Endothelial cell of umbilical vein (primary cell): ENCODE measurements at regions of chr13 and their contacts with region 1.

Region 1: GRCh38 chr13:71395053-71395452 is 472.0 kb downstream of the DACH1 start:
- DNase-seq: no peak
- H3K4me3 ChIP-seq: no peak overlapping the region
- H3K27ac ChIP-seq: no peak overlapping the region
- H3K4me1 ChIP-seq: no peaks in the 10 kb centered on the region
- H3K27me3 ChIP-seq: no peaks in the 10 kb centered on the region
- CTCF ChIP-seq: no peak
- POLR2A ChIP-seq: no peak

Region 2: DNA sequence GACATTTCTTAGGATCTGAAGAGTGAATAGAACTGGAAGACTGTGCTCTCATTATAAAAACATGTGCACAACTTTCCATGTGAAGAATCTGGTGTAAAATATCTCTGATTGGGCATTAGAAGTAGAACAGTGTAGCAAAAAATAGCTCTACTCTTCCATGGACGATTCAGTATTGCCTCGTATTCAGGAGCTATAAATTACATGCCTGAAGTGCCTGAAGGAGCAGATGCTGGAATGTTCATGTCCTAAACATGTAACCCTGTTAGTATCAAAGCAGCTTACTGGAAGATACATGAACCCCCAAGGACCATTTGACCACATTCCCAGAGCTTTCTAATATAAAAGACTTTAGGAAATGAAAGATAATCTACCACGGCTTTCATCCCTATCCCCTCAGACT is 57.0 kb before region 1 on chr13:
- CTCF ChIA-PET with region 1: no interaction called
- POLR2A ChIA-PET with region 1: no interaction called
- dilution Hi-C with region 1: no loop called
- intact Hi-C with region 1: loop called (anchors 10 kb)
- DNase-seq: no peak
- H3K4me3 ChIP-seq: no peak overlapping the region
- H3K27ac ChIP-seq: no peak overlapping the region
- H3K4me1 ChIP-seq: no peaks in the 10 kb centered on the region
- H3K27me3 ChIP-seq: no peaks in the 10 kb centered on the region
- CTCF ChIP-seq: no peak
- POLR2A ChIP-seq: no peak